ENCODE measurements at regions of chr12 and their contacts with region 1.

Region 1: GRCh38 chr12:96399919-96400797 is at the start of gene CDK17:
- DNase-seq: peak; percentile 85 to 96
- ATAC-seq: peak; percentile 65 to 82 (median 68)
- H3K4me3 ChIP-seq: peak within 1 kb of the TSS; percentile 99
- H3K4me3 Mint-ChIP-seq: peak within 1 kb of the TSS; percentile 97
- H3K27ac ChIP-seq: peak within 1 kb of the TSS; percentile 98
- H3K27ac Mint-ChIP-seq: peak within 1 kb of the TSS; percentile 93 to 99
- H3K4me1 ChIP-seq: peaks cover 8% of the 10 kb centered on the region
- H3K4me1 Mint-ChIP-seq: peaks cover 48 to 52% of the 10 kb centered on the region in 2 donors
- H3K27me3 ChIP-seq: no peaks in the 10 kb centered on the region
- H3K27me3 Mint-ChIP-seq: no peaks in the 10 kb centered on the region
- CTCF ChIP-seq: no peak
- total RNA-seq, gene CDK17: 199 to 234 (median 232) TPM

Region 2: DNA sequence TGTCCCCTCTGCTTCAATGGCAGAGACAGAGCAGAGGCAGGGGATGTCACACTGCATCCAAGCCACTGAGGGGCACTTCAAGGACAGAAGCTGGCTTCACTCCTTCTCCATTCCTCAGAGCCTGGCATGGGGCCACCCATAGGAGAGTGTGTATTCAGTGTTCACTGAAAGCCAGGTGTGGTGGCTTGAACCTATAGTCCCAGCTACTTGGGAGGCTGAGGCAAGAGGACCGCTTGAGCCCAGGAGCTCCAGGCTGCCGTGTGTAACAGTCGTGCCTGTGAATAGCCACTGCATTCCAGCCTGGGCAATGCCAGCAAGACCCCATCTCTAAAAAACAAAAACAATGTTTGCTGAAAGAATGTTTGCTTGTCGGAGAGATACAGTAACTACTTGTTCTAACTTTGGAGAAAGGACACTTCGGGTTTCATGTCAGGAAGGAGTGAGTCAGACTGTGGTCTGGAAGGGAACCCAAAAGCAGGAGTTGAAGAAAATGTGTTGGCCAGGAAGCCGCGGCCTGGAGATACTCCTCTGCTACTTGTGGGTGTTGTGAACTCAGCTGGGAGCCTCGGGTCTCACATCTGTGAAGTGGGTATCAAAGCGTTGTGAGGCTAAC is 162.6 kb before region 1 on chr12:
- intact Hi-C with region 1: loop called (anchors 1 kb)
- DNase-seq: peak; percentile 60 to 79
- ATAC-seq: peak; percentile 34 to 54 (median 36)
- H3K4me3 ChIP-seq: no peak overlapping the region
- H3K4me3 Mint-ChIP-seq: peak overlapping the region; percentile 77
- H3K27ac ChIP-seq: peak overlapping the region; percentile 56
- H3K27ac Mint-ChIP-seq: peak overlapping the region; percentile 87 to 95
- H3K4me1 ChIP-seq: peaks cover 75% of the 10 kb centered on the region
- H3K4me1 Mint-ChIP-seq: peaks cover 75 to 82% of the 10 kb centered on the region in 2 donors
- H3K27me3 ChIP-seq: no peaks in the 10 kb centered on the region
- H3K27me3 Mint-ChIP-seq: no peaks in the 10 kb centered on the region
- CTCF ChIP-seq: no peak

Region 3: DNA sequence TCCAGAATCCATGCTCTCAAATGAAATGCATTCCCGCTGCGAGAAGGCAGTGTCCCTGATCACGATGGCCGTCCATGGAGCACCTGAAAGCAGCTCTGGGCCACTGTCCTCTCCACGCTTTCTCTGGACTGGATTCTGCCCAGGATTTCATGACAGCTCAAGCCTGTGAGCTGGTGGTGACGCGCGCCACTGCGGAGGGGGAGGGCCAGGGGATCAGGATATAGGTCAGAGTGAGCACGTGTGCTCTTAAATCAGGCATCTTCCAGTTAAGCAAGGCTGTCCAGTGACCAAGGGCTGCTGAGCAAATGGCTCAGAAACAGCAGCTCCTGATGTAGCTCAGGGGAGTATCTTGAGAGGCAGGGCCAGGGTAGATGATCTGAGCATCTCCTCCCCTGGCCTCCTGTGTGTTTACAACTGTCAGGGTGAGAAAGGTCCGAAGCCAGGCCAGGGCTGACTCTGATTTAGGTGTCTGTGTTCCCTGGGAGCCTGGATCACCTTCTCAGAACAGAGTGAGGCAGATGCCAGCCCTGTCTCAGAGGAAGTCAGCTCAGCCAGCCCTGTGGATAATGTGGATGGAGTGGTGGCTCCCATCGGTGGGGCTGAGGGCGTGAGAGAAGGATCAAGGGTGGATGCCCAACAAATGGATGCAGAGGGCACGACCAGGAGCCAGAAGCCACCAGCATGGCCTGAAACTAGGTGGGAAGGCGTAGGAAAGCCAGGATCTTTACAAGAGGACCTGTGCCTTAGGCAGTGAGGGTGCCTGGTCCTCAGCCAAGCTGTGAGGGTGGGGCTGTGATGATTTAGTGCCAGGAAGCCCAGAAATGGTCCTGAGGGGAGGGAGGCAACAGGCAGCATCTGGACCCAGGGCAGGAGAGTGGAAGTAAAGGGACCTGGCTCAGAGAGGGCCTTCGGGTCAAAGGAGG is 150.7 kb before region 1 on chr12:
- intact Hi-C with region 1: no loop called
- DNase-seq: no peak
- ATAC-seq: peak in 2 of 3 donors; percentile 15 to 17
- H3K4me3 ChIP-seq: no peak overlapping the region
- H3K4me3 Mint-ChIP-seq: no peak overlapping the region
- H3K27ac ChIP-seq: no peak overlapping the region
- H3K27ac Mint-ChIP-seq: peak overlapping the region; percentile 74 to 83
- H3K4me1 ChIP-seq: peaks cover 19% of the 10 kb centered on the region
- H3K4me1 Mint-ChIP-seq: peaks cover 44 to 59% of the 10 kb centered on the region in 2 donors
- H3K27me3 ChIP-seq: no peaks in the 10 kb centered on the region
- H3K27me3 Mint-ChIP-seq: no peaks in the 10 kb centered on the region
- CTCF ChIP-seq: no peak

Region 4: DNA sequence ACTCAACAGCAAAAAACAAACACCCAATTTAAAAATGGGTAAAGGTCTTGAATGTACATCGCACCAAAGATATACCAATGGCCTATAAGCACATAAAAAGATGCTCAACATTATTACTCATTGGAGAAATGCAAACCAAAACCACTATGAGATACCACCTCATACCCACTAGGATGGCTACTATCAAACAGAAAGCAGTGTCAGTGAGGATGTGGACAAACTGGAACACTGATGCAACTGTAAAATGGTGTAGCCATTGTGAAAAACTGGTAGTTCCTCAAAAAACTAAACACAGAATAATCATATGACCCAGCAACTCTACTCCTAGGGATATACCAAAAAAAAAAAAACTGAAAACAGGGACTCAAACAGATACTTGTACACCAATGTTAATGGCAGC is 49.2 kb before region 1 on chr12:
- intact Hi-C with region 1: loop called (anchors 2 kb)
- DNase-seq: no peak
- ATAC-seq: peak; percentile 71 to 82 (median 74)
- H3K4me3 ChIP-seq: no peak overlapping the region
- H3K4me3 Mint-ChIP-seq: peak overlapping the region; percentile 62
- H3K27ac ChIP-seq: peak overlapping the region; percentile 20
- H3K27ac Mint-ChIP-seq: peak overlapping the region; percentile 76 to 81
- H3K4me1 ChIP-seq: peaks cover 35% of the 10 kb centered on the region
- H3K4me1 Mint-ChIP-seq: peaks cover 87 to 88% of the 10 kb centered on the region in 2 donors
- H3K27me3 ChIP-seq: no peaks in the 10 kb centered on the region
- H3K27me3 Mint-ChIP-seq: no peaks in the 10 kb centered on the region
- CTCF ChIP-seq: no peak

Region 5: DNA sequence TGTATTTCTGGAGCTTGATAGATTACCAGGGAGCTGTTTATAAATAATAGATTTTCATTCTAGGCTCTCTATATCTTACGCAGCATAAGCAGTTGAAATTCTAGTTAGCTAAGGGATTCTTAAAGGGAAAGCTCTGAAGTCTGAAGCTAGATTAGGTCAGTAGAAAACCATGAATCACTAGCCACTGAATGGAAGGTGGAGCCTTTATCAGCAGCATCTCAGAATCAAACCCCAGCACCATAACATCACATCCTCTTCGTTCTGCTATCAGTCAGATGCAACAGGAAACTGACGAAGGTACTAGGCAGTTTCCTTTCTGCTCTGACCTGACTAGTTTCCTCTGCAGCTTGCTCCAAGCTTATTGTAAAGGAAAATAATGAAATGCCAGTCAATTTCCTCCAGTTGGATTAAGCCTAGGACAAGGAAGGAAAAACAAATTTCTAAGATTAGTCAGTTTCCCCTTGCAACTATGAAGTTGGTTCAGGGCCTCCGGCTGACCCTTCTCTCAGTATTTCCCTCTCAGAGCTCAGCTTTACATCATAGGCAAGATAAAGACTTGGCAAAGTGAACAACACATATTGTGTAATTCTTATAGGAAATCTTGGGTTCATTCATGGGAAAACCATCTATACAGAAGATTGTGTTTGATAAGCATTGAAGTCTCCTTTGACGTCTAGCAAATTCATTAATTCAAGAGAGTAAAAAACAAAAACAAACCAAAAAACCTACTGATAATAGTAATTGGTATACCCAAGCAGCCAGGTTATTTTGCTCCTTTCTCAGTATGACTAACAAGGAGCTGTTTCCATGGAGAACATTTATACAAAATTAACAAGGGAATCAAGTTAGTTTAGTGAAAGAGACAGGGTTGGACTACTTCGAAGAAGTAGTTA is 45.8 kb after region 1 on chr12:
- intact Hi-C with region 1: loop called (anchors 1 kb)
- DNase-seq: peak; percentile 33 to 92
- ATAC-seq: peak; percentile 89 to 96 (median 94)
- H3K4me3 ChIP-seq: no peak overlapping the region
- H3K4me3 Mint-ChIP-seq: peak overlapping the region; percentile 75
- H3K27ac ChIP-seq: peak overlapping the region; percentile 92
- H3K27ac Mint-ChIP-seq: peak overlapping the region; percentile 96 to 99
- H3K4me1 ChIP-seq: peaks cover 28% of the 10 kb centered on the region
- H3K4me1 Mint-ChIP-seq: peaks cover 35 to 38% of the 10 kb centered on the region in 2 donors
- H3K27me3 ChIP-seq: no peaks in the 10 kb centered on the region
- H3K27me3 Mint-ChIP-seq: no peaks in the 10 kb centered on the region
- CTCF ChIP-seq: no peak

Region 6: GRCh38 chr12:96516472-96517430 is 116.6 kb after region 1 on chr12:
- intact Hi-C with region 1: loop called (anchors 1 kb)
- DNase-seq: peak; percentile 77 to 93
- ATAC-seq: peak; percentile 87 to 95 (median 93)
- H3K4me3 ChIP-seq: no peak overlapping the region
- H3K4me3 Mint-ChIP-seq: peak overlapping the region; percentile 13
- H3K27ac ChIP-seq: no peak overlapping the region
- H3K27ac Mint-ChIP-seq: peak overlapping the region; percentile 62 to 80
- H3K4me1 ChIP-seq: peaks cover 2% of the 10 kb centered on the region
- H3K4me1 Mint-ChIP-seq: peaks cover 4 to 6% of the 10 kb centered on the region in 2 donors
- H3K27me3 ChIP-seq: no peaks in the 10 kb centered on the region
- H3K27me3 Mint-ChIP-seq: peaks cover 0 to 4% of the 10 kb centered on the region in 2 donors
- CTCF ChIP-seq: peak; percentile 84

Region 7: DNA sequence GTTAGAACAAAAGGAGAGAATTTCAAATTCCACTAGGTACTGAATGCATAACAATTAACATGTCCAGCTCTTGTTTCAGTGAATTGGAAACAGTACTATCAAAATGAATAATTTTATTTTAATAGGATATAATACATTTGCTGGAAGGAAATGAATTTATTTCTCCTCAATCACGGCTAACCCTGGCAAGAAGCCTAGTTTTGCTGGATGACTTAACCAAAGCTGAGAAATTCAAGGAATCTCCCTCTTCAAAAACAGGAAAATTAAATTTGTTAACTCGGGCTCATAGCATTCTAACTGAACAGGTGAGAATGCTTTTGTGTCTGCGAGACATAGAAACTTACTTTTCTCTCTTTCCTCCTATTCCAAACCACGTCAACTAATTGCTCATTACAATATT is 343.4 kb after region 1 on chr12:
- intact Hi-C with region 1: no loop called
- DNase-seq: no peak
- ATAC-seq: no peak
- H3K4me3 ChIP-seq: no peak overlapping the region
- H3K4me3 Mint-ChIP-seq: no peak overlapping the region
- H3K27ac ChIP-seq: no peak overlapping the region
- H3K27ac Mint-ChIP-seq: no peak overlapping the region
- H3K4me1 ChIP-seq: no peaks in the 10 kb centered on the region
- H3K4me1 Mint-ChIP-seq: no peaks in the 10 kb centered on the region
- H3K27me3 ChIP-seq: no peaks in the 10 kb centered on the region
- H3K27me3 Mint-ChIP-seq: peaks cover 6 to 15% of the 10 kb centered on the region in 2 donors
- CTCF ChIP-seq: no peak